Upper lobe of right lung (tissue), 1 donor: ENCODE measurements at regions of chr1 and their contacts with region 1.

Region 1: GRCh38 chr1:205255941-205256780 is 28.4 kb downstream of the TMCC2 start:
- DNase-seq: peak; percentile 92
- ATAC-seq: peak; percentile 95
- H3K4me3 ChIP-seq: no peak overlapping the region
- H3K27ac ChIP-seq: no peak overlapping the region
- H3K4me1 ChIP-seq: peaks cover 15% of the 10 kb centered on the region
- H3K27me3 ChIP-seq: no peaks in the 10 kb centered on the region
- CTCF ChIP-seq: peak; percentile 96

Region 2: DNA sequence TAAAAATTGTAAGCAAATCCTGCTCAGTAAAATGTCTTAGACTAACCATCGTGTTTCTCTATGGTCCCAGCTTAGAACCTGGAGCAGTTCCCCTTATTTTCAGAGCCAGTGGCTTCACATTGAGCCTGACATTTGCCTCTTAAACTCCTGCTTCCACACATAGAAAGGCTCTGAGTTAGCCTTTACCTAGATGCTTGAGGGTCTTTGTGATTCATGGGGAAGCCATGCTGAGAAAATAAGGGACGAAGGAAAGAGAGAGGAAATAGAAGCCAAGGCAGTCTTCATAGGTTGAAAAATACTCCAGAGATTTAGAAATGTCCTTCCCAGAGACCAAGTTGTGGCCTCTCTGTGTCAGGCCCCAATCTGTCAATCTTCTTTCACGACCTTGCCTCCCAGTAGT is 118.3 kb before region 1 on chr1:
- intact Hi-C with region 1: loop called (anchors 10 kb)
- DNase-seq: no peak
- ATAC-seq: no peak
- H3K4me3 ChIP-seq: no peak overlapping the region
- H3K27ac ChIP-seq: no peak overlapping the region
- H3K4me1 ChIP-seq: peaks cover 5% of the 10 kb centered on the region
- H3K27me3 ChIP-seq: no peaks in the 10 kb centered on the region
- CTCF ChIP-seq: no peak

Region 3: GRCh38 chr1:205150651-205151428 is 105.3 kb before region 1 on chr1:
- intact Hi-C with region 1: no loop called
- DNase-seq: no peak
- ATAC-seq: no peak
- H3K4me3 ChIP-seq: no peak overlapping the region
- H3K27ac ChIP-seq: no peak overlapping the region
- H3K4me1 ChIP-seq: no peaks in the 10 kb centered on the region
- H3K27me3 ChIP-seq: no peaks in the 10 kb centered on the region
- CTCF ChIP-seq: no peak

Region 4: DNA sequence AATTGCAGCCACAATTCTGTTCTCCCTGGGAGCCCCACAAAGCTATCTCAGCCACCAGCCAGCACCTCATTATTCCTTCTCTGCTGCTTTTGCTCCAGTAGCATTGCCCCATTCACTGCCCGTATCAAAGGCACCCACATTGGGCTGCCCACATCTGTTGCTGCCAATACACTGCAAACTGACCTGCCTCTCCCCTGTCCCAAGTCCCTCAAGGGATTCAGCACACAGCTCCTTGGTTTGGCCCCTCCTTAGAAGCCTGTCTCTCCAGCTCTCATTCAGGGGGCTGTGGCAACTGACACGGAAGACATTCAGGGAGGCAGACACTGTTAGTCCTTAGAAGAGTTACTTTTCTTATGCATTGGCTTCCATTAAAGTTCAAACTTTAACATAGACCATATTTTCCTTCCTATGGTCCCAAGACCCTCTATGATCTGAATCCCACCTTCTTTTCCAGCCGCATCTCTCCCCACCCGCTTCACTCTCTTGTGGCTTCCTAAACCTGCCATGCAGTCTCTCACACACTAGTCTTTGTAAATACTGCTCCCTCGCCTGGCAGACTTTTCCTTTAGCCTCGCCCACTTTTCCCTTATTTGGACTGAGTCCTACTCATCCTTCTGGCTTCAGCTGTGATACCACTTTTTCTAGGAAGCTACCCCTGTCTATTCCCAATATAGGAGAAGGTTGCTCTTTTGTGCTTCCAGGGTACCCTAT is 119.8 kb after region 1 on chr1:
- intact Hi-C with region 1: no loop called
- DNase-seq: no peak
- ATAC-seq: peak; percentile 58
- H3K4me3 ChIP-seq: no peak overlapping the region
- H3K27ac ChIP-seq: no peak overlapping the region
- H3K4me1 ChIP-seq: peaks cover 21% of the 10 kb centered on the region
- H3K27me3 ChIP-seq: no peaks in the 10 kb centered on the region
- CTCF ChIP-seq: no peak

Region 5: DNA sequence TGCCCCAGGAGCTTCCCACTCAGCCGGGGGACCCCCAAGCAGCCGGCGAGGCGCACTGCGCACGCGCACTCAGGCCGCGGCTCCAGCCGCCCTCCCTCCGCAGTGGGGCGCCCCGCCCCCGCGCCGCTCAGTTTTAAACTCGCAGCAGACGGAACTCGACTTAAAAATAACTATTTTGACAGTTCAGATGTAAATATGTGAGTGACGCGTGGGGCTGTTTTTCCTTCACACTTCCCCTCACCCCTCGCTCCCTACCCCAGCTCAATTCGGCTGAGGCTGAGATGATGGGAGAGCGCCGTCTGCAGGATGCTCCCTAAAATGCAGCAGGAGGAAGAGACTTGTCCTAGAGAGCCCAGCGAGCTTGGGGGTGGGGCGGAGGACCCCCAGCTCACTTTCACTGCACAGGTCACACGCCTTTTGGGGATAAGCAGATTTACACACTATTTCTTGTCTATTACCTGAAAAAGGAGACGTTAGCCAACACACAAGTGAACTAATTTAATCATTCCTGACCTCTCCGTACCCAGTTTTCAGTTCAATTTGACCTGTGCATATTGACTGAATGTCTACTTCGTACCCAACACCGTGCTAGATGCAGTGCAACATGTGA is 174.6 kb after region 1 on chr1:
- intact Hi-C with region 1: no loop called
- DNase-seq: peak; percentile 75
- ATAC-seq: peak; percentile 76
- H3K4me3 ChIP-seq: peak overlapping the region; percentile 51
- H3K27ac ChIP-seq: no peak overlapping the region
- H3K4me1 ChIP-seq: peaks cover 6% of the 10 kb centered on the region
- H3K27me3 ChIP-seq: peaks cover 10% of the 10 kb centered on the region
- CTCF ChIP-seq: peak; percentile 79